Common myeloid progenitor, CD34-positive (primary cell): ENCODE measurements at regions of chr2 and their contacts with region 1.

Region 1: DNA sequence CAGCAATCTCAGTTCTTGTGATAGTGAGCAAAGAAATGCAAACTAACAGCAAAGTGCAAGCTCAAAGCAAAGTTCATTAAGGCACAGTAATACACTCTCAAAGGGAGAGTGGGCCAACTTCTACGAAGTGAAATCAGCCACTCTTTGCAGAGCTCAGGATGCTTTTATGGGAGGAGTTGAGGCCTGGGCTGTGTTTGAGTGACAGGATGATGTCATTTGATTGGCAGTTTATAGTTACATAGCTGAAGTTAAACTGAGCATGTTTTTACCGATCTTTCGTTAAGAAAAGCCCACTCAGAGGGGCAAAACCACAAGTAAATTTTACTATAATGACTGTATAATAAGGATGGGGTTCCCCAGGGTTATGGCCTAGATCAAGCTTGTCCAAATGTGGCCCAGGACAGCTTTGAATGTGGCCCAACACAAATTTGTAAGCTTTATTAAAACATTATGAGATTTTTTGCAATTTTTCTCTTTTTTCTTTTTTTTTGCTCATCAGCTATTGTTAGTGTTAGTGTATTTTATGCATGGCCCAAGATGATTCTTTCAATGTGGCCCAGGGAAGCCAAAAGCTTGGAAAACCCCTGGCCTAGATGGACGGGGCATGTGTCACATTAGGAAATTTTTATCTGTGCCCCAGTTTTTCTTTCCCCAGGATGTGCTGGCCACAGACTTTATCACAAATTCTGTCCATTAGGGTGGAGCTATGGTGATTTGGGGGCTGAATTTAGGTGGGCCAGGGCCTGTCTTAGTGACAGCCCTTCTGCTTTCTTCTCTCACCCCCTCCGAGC is 8.3 kb upstream of the DNAH7 start:
- DNase-seq: no peak
- H3K4me3 ChIP-seq: no peak overlapping the region
- H3K27ac ChIP-seq: no peak overlapping the region
- H3K4me1 ChIP-seq: peaks cover 4 to 7% (median 5%) of the 10 kb centered on the region in 4 experiments
- H3K27me3 ChIP-seq: no peaks in the 10 kb centered on the region

Region 2: DNA sequence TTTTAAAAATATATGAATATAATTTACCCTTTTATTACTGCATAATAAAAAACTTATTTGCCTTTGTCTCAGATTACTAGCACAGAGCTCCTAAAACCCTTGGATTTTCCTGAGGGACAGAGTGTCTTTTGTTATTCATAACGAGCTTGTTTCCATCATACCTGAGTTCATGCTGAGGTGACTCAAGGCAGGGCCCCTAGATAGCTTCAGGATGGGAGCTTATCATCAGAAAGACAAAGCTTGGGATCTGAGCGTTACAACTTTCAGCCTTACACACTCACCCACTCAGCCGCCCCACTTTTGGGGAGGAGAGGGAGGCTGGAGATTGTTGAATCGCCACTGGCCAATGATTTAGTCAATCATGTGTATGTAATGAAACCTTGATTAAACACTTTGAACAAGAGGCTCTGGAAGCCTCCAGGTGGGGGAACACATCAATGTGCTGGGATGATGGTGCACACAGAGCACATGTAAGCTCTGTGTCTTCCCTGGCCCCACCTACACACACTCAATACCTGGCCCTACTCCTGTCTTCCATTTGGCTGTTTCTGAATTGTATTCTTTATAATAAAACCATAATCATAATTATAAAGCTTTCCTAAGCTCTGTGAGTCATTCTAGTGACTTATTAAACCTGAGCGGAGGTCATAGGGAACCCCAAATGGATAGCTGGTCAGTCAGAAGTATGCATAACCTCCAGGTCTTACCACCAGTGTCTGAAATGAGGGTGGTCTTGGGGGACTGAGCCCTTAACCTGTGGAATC is 20.2 kb after region 1 on chr2:
- CTCF ChIA-PET with region 1: interaction called, 11 read pairs
- POLR2A ChIA-PET with region 1: no interaction called
- DNase-seq: no peak
- H3K4me3 ChIP-seq: no peak overlapping the region
- H3K27ac ChIP-seq: no peak overlapping the region
- H3K4me1 ChIP-seq: peaks cover 0 to 17% (median 8%) of the 10 kb centered on the region in 4 experiments
- H3K27me3 ChIP-seq: no peaks in the 10 kb centered on the region

Region 3: DNA sequence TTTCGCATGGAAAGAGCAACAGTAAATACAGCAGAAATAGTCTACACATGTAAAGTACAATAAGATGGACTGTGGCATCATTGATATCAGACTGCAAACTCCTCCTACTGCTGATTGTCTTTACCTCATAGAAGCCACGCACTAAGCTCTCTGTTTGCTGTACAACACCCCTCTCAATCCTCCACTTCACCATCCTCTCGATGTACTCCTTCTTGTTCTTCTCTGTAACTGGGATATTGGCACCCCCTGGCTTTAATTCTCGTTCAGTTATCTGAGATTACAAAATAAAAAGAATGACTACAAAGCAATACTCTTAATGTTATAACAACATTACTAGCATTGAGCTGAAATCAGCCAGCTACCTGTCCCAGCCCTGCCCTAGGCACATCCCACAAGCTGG is 143.7 kb after region 1 on chr2:
- CTCF ChIA-PET with region 1: interaction called, 30 read pairs
- POLR2A ChIA-PET with region 1: no interaction called
- DNase-seq: peak in 2 of 3 donors; percentile 35 to 43
- H3K4me3 ChIP-seq: no peak overlapping the region
- H3K27ac ChIP-seq: no peak overlapping the region
- H3K4me1 ChIP-seq: peaks cover 0 to 7% (median 3%) of the 10 kb centered on the region in 4 experiments
- H3K27me3 ChIP-seq: no peaks in the 10 kb centered on the region

Region 4: DNA sequence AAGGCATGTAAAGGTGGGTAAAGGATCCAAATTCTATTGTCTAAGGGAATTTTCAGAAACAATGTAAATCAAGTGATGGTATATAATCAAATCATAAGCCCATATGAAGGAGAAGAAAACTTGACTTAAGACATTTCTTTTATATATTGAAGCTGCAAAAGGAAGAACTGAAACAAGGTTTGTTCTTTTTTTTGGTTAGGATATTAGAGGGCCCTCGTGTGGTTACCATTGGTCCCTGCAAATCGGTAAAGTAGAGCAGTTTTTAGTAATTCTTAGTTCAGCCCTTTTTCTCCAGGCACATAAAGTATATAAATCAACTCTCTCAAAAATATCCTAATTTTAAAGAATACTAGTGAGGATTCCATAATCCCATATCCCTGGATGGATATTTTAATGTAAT is 200.0 kb after region 1 on chr2:
- CTCF ChIA-PET with region 1: interaction called, 31 read pairs
- POLR2A ChIA-PET with region 1: interaction called, 4 read pairs
- DNase-seq: peak; percentile 60 to 79 (median 77)
- H3K4me3 ChIP-seq: no peak overlapping the region
- H3K27ac ChIP-seq: no peak overlapping the region
- H3K4me1 ChIP-seq: peaks cover 11 to 29% (median 21%) of the 10 kb centered on the region in 4 experiments
- H3K27me3 ChIP-seq: no peaks in the 10 kb centered on the region

Region 5: DNA sequence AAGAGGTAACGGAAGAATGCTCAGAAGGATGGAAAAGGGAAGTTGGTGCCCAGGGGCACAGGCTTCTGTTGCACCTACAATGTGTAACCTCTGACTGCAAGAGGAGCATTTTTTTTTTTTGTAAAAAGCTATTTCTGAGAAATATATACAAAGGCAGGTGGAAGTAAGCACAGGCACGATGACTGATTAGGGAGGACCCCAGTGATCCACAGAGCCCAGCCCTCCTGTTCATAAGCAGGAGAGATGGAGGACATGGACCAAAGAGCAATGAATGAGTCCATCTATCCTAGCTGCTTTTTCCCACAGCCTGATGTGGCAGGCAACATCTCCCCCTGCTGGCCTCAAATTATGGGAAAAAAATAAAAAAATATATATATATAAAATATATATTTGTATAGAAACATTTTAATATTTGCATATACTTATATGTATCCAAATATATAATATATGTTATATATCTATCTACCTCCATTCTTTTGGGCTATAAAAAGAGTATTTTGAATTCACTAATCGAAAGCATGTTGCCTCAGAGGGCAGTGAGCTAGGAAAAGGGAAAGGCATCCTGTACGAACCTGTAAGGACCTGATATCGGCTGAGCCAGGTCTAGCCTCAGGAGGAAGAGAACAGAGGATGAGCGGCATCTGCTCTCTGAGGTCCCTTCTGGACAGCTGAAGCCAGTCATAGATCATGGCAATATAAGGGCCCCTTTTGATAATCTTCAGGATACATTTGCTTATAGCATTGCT is 260.4 kb after region 1 on chr2:
- CTCF ChIA-PET with region 1: interaction called, 103 read pairs
- POLR2A ChIA-PET with region 1: no interaction called
- DNase-seq: peak; percentile 36 to 56 (median 47)
- H3K4me3 ChIP-seq: no peak overlapping the region
- H3K27ac ChIP-seq: no peak overlapping the region
- H3K4me1 ChIP-seq: peaks cover 0 to 2% (median under 1%) of the 10 kb centered on the region in 4 experiments
- H3K27me3 ChIP-seq: no peaks in the 10 kb centered on the region

Region 6: GRCh38 chr2:196453613-196454047 is 376.7 kb after region 1 on chr2:
- CTCF ChIA-PET with region 1: interaction called, 27 read pairs
- POLR2A ChIA-PET with region 1: no interaction called
- DNase-seq: peak; percentile 48 to 64 (median 50)
- H3K4me3 ChIP-seq: no peak overlapping the region
- H3K27ac ChIP-seq: no peak overlapping the region
- H3K4me1 ChIP-seq: no peaks in the 10 kb centered on the region
- H3K27me3 ChIP-seq: peaks cover 0 to 27% (median 12%) of the 10 kb centered on the region in 5 experiments